ENCODE measurements at regions of chr7 and their contacts with region 1.

Region 1: GRCh38 chr7:131654668-131655326 is 98.4 kb upstream of the PODXL start:
- DNase-seq: peak; percentile 67 to 87 (median 75)
- ATAC-seq: peak; percentile 88
- H3K4me3 ChIP-seq: no peak overlapping the region
- H3K4me3 Mint-ChIP-seq: no peak overlapping the region
- H3K27ac ChIP-seq: no peak overlapping the region
- H3K27ac Mint-ChIP-seq: no peak overlapping the region
- H3K4me1 ChIP-seq: no peaks in the 10 kb centered on the region
- H3K4me1 Mint-ChIP-seq: no peaks in the 10 kb centered on the region
- H3K27me3 ChIP-seq: peaks cover 0 to 9% of the 10 kb centered on the region in 2 experiments
- H3K27me3 Mint-ChIP-seq: peaks cover 11% of the 10 kb centered on the region
- CTCF ChIP-seq: peak; percentile 72

Region 2: DNA sequence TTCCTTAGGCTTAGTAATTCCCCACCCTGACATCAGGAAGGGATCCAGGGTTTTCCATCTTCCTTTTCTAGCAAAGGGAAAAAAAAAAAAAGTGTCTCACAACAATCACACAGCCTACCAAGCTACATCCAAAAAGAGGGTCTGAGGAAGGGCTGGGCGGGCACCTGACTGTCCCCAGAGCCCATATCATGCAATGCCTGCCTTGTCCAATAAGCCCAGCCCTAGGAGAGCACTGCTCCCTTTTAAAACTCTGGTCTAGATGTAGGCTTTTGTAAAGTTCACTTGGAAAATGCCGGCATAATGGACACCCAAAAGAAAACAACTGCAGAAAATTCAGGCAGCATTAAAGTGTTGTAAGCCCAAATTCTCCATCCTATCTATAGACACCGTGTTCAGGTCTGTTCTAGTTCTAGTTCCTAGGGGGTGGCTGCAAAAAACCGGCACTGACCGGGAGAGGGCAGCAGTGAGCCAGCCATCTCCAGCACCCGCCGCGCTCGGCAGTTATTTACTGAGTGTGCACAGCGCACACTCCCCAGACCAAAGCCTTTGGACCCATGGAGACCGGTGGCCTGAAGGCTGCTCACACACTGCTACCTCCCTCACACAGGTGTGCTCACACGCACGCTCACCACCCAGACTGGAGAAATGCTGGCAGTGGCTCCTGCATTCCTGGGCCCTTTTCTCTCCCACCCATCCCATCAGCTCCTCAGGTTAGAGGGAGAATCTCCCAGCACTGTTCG is 147.0 kb before region 1 on chr7:
- CTCF ChIA-PET with region 1: interaction called, 13 read pairs
- POLR2A ChIA-PET with region 1: no interaction called
- intact Hi-C with region 1: loop called in 1 of 2 experiments (anchors 1 kb)
- DNase-seq: peak; percentile 66 to 86 (median 80)
- ATAC-seq: peak; percentile 97
- H3K4me3 ChIP-seq: no peak overlapping the region
- H3K4me3 Mint-ChIP-seq: peak overlapping the region; percentile 27
- H3K27ac ChIP-seq: no peak overlapping the region
- H3K27ac Mint-ChIP-seq: no peak overlapping the region
- H3K4me1 ChIP-seq: peaks cover 10% of the 10 kb centered on the region
- H3K4me1 Mint-ChIP-seq: peaks cover 25% of the 10 kb centered on the region
- H3K27me3 ChIP-seq: no peaks in the 10 kb centered on the region
- H3K27me3 Mint-ChIP-seq: peaks cover 8% of the 10 kb centered on the region
- CTCF ChIP-seq: peak; percentile 71

Region 3: DNA sequence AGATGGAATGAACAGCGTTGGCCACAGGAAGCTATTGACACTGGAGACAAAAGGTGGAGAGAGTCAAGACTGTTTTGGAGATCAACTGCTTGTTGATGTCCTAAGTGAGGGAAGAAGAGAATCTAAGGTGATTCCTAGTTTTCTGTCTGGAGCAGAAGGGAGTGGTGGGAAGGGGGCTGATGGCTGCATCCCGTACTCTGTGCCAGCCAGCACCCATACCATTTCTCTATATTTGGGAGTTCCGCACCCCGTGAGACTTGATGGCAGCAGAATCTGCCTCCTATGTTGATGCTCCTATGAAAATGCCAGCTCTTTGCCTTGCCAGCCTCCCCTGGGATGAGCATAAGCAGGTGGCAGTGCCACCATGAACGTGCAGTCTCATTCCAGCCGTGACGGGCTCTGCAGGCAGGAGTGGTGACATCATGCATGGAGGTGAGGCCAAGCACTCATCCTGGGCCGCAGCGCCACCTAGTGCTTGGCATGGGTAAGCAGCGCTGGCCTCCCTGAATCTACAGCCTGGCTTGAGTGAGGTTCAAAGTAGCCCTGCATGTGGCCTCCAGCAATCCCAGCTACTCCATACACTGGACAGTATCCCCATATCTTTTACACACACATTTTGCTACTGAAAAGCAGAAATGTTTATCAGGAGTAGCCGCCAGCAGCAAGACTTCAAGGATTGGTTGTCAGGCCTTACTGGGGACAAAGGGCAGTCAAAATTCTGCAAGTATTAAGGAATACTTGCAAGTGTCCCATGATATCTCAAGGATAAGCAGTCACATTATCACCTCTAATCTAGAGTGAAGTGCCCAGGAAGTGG is 141.3 kb before region 1 on chr7:
- CTCF ChIA-PET with region 1: interaction called, 13 read pairs
- POLR2A ChIA-PET with region 1: no interaction called
- intact Hi-C with region 1: loop called in 1 of 2 experiments (anchors 1 kb)
- DNase-seq: peak; percentile 42 to 82 (median 77)
- ATAC-seq: peak; percentile 100
- H3K4me3 ChIP-seq: no peak overlapping the region
- H3K4me3 Mint-ChIP-seq: no peak overlapping the region
- H3K27ac ChIP-seq: no peak overlapping the region
- H3K27ac Mint-ChIP-seq: no peak overlapping the region
- H3K4me1 ChIP-seq: peaks cover 9% of the 10 kb centered on the region
- H3K4me1 Mint-ChIP-seq: peaks cover 20% of the 10 kb centered on the region
- H3K27me3 ChIP-seq: no peaks in the 10 kb centered on the region
- H3K27me3 Mint-ChIP-seq: peaks cover 9% of the 10 kb centered on the region
- CTCF ChIP-seq: peak; percentile 74

Region 4: GRCh38 chr7:131803861-131804260 is 149.1 kb after region 1 on chr7:
- CTCF ChIA-PET with region 1: no interaction called
- POLR2A ChIA-PET with region 1: no interaction called
- intact Hi-C with region 1: no loop called
- DNase-seq: no peak
- ATAC-seq: no peak
- H3K4me3 ChIP-seq: no peak overlapping the region
- H3K4me3 Mint-ChIP-seq: no peak overlapping the region
- H3K27ac ChIP-seq: no peak overlapping the region
- H3K27ac Mint-ChIP-seq: no peak overlapping the region
- H3K4me1 ChIP-seq: no peaks in the 10 kb centered on the region
- H3K4me1 Mint-ChIP-seq: no peaks in the 10 kb centered on the region
- H3K27me3 ChIP-seq: no peaks in the 10 kb centered on the region
- H3K27me3 Mint-ChIP-seq: peaks cover 13% of the 10 kb centered on the region
- CTCF ChIP-seq: no peak

Region 5: GRCh38 chr7:131995328-131995727 is 340.5 kb after region 1 on chr7:
- CTCF ChIA-PET with region 1: no interaction called
- POLR2A ChIA-PET with region 1: no interaction called
- intact Hi-C with region 1: no loop called
- DNase-seq: no peak
- ATAC-seq: no peak
- H3K4me3 ChIP-seq: no peak overlapping the region
- H3K4me3 Mint-ChIP-seq: no peak overlapping the region
- H3K27ac ChIP-seq: no peak overlapping the region
- H3K27ac Mint-ChIP-seq: no peak overlapping the region
- H3K4me1 ChIP-seq: no peaks in the 10 kb centered on the region
- H3K4me1 Mint-ChIP-seq: no peaks in the 10 kb centered on the region
- H3K27me3 ChIP-seq: no peaks in the 10 kb centered on the region
- H3K27me3 Mint-ChIP-seq: peaks cover 6% of the 10 kb centered on the region
- CTCF ChIP-seq: no peak